Activated CD4-positive, alpha-beta T cell treated with anti-CD3 and anti-CD28 coated beads, Interleukin-2, amount 10 ng/mL, durations not matched to agents 24 days and 14 days (primary cell): ENCODE measurements at regions of chr10 and their contacts with region 1.

Region 1: DNA sequence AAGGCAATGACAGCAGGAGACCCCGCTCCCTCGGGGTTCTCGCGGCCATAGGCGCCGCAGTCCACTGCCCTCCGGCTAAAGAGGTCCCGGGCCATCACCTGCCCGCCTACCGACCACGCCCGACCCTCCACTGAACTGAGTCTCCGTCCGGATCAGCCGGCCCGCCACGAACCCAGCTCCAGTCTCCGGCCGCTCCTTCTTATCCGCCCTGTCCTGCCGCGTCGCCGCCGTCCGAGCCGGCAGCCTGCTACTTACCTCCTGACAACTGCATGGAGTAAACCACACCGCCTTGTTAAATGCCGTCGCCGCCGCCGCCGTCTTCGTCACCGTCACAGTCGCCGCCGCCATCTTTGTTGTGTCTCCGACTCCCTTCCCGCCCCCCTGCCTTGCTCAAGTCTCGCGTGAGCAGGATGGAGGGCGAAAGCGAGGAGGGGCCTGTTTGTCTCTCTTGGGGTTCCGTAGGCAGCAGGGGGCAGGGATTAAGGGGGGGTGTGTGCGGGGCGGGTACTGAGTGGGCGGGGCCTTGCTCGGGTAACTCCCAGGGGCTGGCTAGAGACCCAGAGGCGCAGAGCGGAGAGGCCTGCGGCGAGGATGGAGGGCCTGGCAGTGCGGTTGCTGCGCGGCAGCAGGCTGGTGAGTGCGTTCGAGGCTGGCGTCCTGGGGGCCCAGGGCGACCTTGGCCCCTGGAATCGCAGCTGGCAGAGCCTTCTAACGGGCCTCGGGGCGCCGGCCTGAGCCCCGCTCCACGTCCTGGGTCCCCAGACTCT is at the starts of genes ACADSB and IKZF5:
- DNase-seq: peak; percentile 98
- H3K4me3 Mint-ChIP-seq: peak within 1 kb of the TSS; percentile 98
- H3K27ac Mint-ChIP-seq: peak within 1 kb of the TSS; percentile 100
- H3K4me1 Mint-ChIP-seq: peaks cover 27% of the 10 kb centered on the region
- H3K27me3 Mint-ChIP-seq: no peaks in the 10 kb centered on the region
- total RNA-seq, gene ACADSB: 21.3 and 21.6 TPM in 2 replicates
- total RNA-seq, gene IKZF5: 17.9 and 18.3 TPM in 2 replicates

Region 2: DNA sequence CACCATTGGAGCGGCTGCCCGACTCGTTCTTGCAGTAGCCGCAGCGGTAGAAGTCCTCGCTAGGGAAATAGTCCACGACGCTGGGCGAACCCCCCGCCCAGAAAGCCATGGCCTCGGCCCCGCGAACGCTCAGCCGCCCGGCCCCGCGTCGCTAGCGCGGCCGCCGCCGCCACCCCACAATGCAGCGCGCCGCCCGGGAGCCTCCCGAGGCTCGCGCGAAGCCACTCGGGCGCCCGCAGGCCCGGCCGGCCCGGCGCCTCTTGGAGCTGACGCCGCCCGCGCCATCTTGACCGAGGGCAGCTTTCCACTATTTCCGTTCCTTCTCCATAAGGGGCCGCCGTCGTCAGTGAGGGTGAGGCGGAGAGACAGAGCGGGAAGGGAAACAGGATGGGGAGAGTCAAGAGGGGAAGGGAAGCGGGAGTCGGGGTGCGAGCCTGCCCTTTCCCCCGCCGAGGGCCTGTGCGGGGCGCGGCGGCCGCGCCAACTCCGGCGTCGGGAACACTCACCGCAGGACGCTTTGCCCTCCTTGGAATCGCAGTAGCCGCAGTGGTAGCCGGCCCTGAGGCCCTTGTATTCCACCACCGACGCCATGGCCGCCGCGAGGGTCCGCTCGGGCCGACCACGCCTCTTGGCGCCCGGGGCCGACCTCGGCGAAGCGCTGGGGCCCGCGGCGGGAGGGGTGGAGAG is 1080.6 kb before region 1 on chr10 and contains the start of gene ATE1:
- intact Hi-C with region 1: loop called (anchors 10 kb)
- DNase-seq: peak; percentile 95
- H3K4me3 Mint-ChIP-seq: peak within 1 kb of the TSS; percentile 93
- H3K27ac Mint-ChIP-seq: peak within 1 kb of the TSS; percentile 95
- H3K4me1 Mint-ChIP-seq: peaks cover 18% of the 10 kb centered on the region
- H3K27me3 Mint-ChIP-seq: no peaks in the 10 kb centered on the region
- total RNA-seq, gene ATE1: 39.0 and 39.1 TPM in 2 replicates

Region 3: DNA sequence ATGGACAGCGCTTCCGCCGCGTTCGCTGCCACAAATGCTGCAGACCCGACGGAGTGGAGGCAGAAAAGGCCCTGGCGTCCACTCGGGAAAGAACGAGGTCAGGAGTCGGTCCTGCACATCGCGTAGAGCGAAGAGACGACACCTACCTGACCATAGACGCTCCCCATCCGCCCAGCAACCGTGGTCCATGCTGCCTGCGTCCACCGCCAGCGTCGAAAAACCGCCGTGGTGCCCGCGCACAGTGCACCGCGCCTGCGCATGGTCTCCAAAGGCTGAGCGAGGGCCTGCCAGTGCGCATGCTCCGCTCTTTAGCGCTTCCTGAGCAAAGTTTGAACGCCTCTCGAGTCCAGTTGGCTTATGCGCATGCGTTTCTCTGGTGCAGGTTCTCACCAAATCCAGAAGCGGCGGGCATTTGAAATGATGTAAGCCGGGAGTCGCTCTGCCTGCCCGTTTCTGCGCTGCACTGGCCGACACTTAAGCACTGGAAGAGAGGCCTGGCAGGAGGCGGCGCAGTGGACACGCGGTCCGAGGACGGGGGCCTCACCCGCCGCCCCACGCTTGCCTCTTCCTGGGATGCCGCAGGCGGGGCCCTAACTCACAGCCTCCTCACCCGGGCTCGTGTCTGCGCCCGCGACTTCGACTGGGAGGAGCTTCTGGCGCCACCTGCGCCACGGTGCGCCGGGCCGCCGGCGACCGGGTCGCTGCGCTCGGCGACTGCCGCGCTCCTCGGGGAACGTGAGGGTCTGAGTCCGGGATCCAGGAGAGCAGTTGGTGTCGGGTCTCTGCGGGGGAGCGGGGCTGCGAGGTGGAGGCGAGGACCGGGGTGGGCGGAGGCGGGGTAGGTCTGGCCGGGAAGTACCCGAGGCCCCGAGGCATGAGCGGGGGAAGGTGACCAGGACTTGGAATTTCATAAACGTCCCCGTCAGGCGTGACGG is 129.0 kb before region 1 on chr10 and contains the start of gene FAM24B:
- intact Hi-C with region 1: loop called (anchors 1 kb)
- DNase-seq: peak; percentile 98
- H3K4me3 Mint-ChIP-seq: peak within 1 kb of the TSS; percentile 98
- H3K27ac Mint-ChIP-seq: peak within 1 kb of the TSS; percentile 96
- H3K4me1 Mint-ChIP-seq: peaks cover 38% of the 10 kb centered on the region
- H3K27me3 Mint-ChIP-seq: no peaks in the 10 kb centered on the region
- total RNA-seq, gene FAM24B: 14.2 and 15.2 TPM in 2 replicates

Region 4: DNA sequence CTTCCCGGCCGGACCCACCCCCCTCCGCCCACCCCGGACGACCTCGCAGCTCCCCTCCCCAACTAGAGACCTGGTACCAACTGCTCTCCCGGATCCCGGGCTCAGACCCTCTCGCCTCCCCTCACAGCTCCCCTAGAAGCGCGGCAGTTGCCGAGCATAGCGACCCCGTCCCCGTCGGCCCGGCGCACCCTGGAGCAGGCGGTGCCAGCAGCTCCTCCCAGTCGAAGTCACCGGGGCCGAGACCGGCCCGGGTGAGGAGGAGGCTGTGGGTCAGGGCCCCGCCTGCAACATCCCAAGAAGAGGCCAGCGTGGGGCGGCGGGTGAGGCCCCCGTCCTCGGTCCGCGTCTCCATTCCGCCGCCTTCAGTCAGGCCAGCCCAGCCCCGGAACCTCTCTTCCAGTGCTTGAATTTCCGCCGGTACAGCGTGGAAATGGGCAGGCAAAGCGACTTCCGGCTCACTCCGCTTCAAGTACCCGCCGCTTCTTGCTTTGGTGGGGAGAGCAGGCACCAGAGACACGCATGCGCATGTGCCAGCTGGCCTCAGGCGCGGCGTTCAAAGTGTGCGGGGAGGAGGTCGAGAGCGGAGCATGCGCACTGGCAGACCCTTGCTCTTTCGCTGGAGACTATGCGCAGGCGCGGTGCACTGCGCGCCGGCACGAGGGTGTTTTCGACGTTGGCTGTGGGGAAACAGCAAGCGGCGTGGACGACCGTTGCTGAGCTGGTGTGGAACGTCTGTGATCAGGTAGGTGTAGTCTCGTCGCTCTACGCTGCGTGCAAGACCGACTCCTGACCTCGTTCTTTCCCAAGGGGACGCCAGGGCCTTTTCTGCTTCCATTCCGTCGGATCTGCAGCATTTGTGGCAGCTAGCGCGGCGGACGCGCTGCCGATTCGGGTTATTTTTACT is 54.5 kb before region 1 on chr10 and contains the start of gene C10orf88:
- intact Hi-C with region 1: loop called (anchors 1 kb)
- DNase-seq: peak; percentile 99
- H3K4me3 Mint-ChIP-seq: peak within 1 kb of the TSS; percentile 91
- H3K27ac Mint-ChIP-seq: peak within 1 kb of the TSS; percentile 92
- H3K4me1 Mint-ChIP-seq: peaks cover 22% of the 10 kb centered on the region
- H3K27me3 Mint-ChIP-seq: peaks cover 15% of the 10 kb centered on the region
- total RNA-seq, gene C10orf88: 13.9 and 15.7 TPM in 2 replicates

Region 5: DNA sequence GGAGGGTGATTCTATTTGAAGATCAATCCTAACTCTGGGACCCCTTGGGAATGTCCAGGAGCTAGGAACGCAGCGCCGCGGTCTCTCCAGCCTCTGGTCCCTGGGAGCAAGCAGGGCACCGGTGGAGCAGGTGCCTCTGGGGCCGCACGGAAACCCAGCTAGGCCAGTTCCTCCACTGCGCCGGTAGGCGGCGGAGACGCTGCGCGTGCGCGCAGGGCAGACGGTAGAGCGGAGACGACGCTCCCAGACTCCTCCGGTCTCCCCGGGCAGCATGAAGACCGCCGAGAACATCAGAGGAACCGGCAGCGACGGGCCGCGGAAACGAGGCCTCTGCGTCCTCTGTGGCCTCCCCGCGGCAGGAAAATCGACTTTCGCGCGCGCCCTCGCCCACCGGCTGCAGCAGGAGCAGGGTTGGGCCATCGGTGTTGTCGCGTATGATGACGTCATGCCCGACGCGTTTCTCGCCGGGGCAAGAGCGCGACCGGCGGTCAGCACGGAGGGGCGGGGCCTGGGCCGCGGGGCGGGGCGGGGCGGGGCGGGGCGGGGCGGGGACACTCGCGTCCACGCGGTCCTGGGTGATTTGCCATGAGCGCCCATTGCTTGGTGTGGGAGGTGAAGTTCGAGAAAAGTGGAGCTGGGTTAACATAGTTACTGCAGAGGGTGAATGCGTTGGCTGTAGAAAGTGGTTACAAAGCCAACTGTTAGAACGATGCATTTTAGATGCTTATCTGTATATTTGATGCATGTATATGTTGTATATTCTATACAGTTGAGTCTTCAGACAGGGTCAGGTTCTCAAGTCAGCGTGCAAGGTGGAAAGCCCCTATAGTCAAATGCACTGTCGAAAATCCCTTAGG is 28.2 kb before region 1 on chr10 and contains the start of gene PSTK:
- intact Hi-C with region 1: loop called (anchors 1 kb)
- DNase-seq: peak; percentile 96
- H3K4me3 Mint-ChIP-seq: peak within 1 kb of the TSS; percentile 91
- H3K27ac Mint-ChIP-seq: peak within 1 kb of the TSS; percentile 98
- H3K4me1 Mint-ChIP-seq: peaks cover 16% of the 10 kb centered on the region
- H3K27me3 Mint-ChIP-seq: peaks cover 10% of the 10 kb centered on the region
- total RNA-seq, gene PSTK: 4.5 and 4.8 TPM in 2 replicates

Region 6: DNA sequence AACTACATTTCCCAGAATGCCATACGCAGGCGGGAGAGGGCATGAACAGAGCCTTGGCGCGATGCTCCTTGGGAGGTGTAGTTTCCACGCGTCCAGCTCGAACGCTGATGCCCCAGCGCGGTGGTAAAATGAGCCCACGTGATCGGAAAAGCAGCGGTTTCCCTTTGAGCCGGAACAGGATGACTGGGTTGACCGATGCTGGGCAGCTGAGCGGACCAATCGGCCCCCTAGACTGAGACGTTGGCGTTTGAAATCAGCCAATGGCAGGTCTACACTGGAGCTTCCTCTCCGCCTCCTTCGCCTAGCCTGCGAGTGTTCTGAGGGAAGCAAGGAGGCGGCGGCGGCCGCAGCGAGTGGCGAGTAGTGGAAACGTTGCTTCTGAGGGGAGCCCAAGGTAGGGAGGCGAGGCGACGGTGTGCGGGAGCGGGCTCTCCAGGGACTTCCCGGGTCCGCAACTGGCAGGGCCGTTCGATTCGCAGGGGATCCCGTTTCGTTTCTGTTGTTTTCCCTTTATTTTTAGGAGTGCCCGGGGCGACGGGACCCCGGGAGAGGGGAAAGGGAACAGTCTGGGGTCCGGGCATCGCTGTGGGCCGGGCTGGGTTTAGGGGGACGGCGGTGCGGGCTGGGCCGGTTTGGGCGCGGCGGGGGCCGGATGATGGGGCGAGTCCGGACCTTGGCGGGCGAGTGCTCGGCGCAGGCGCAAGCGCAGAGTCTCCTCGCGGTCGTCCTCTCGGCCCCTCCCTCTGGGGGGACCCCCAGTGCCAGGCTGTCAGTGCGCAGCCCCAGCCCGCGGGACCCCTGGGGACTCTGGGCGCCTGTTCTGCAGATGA is 145.7 kb after region 1 on chr10 and contains the start of gene BUB3:
- intact Hi-C with region 1: loop called (anchors 1 kb)
- DNase-seq: peak; percentile 98
- H3K4me3 Mint-ChIP-seq: peak within 1 kb of the TSS; percentile 95
- H3K27ac Mint-ChIP-seq: peak within 1 kb of the TSS; percentile 100
- H3K4me1 Mint-ChIP-seq: peaks cover 54% of the 10 kb centered on the region
- H3K27me3 Mint-ChIP-seq: peaks cover 18% of the 10 kb centered on the region
- total RNA-seq, gene BUB3: 186 and 193 TPM in 2 replicates

Region 7: GRCh38 chr10:123721430-123722257 is 713.0 kb after region 1 on chr10:
- intact Hi-C with region 1: no loop called
- DNase-seq: no peak
- H3K4me3 Mint-ChIP-seq: no peak overlapping the region
- H3K27ac Mint-ChIP-seq: no peak overlapping the region
- H3K4me1 Mint-ChIP-seq: no peaks in the 10 kb centered on the region
- H3K27me3 Mint-ChIP-seq: no peaks in the 10 kb centered on the region

Region 8: GRCh38 chr10:124791378-124792348 is 1783.0 kb after region 1 on chr10 and contains the start of gene EEF1AKMT2:
- intact Hi-C with region 1: loop called (anchors 10 kb)
- DNase-seq: peak; percentile 95
- H3K4me3 Mint-ChIP-seq: peak within 1 kb of the TSS; percentile 96
- H3K27ac Mint-ChIP-seq: peak within 1 kb of the TSS; percentile 97
- H3K4me1 Mint-ChIP-seq: peaks cover 17% of the 10 kb centered on the region
- H3K27me3 Mint-ChIP-seq: peaks cover 10% of the 10 kb centered on the region
- total RNA-seq, gene EEF1AKMT2: 21.5 and 22.3 TPM in 2 replicates